ENCODE measurements at regions of chr2 and their contacts with region 1.

Region 1: DNA sequence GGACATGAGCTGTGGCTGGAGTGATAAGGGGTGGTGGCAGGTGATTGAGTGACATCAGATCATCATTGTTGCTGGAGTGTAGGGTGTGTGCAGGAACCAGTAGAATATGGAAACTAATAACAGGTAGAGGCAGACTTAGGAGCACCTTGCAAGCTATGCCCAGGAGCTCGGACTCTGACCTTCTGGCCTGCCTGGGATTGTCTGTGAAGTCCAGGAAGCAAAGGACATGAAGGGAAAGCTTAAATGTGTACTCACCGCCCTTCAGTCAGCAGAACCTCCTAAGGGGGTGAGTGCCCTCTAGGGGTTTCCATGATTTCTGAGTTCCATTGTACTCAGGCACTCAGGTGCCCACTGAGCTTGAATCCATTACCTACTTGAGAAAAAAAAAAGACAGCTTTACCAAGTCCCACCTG is 104.2 kb downstream of the CRIM1 start:
- DNase-seq: no peak
- H3K4me3 ChIP-seq: no peak overlapping the region
- CTCF ChIP-seq: peak; percentile 66

Region 2: GRCh38 chr2:36413218-36413617 is 46.5 kb before region 1 on chr2:
- in situ Hi-C with region 1: loop called (anchors 5 kb)
- DNase-seq: no peak
- H3K4me3 ChIP-seq: no peak overlapping the region
- CTCF ChIP-seq: no peak

Region 3: DNA sequence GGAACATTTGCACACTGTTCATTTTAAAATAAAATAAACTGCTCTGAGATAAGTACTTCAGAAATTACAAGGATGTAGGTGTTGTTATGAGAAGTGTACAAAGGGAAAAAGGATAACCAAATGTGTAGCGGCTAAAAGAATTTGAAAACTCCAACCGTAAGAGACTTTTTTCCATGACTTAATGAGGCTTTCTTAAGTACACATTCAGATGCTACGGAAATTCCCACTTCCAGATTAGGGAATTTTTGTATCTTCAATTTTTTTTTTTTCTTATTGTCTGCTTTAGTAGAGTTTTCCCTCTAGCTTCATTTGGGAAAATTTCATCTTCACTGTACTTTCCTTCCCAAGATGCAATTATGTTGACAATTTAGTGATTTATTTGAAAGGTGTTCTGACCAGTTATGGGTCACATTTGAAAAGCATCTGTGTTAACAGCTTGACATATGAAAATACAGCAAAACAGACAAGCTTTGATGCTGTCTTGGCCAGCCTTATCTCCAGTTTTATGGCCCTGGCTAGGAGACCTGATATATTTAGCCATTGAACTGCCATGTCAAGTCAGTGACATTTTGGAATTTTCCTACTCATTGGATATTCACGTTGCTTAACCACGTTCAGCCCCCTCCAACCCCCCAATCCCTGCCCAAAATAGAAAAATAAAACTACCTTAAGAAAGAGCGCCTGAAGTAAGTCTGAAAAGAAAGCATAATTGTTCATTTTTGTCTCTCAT is 32.6 kb after region 1 on chr2:
- in situ Hi-C with region 1: loop called (anchors 5 kb)
- DNase-seq: no peak
- H3K4me3 ChIP-seq: no peak overlapping the region
- CTCF ChIP-seq: no peak

Measured in astrocyte of the cerebellum (primary cell).